Naive thymus-derived CD4-positive, alpha-beta T cell (primary cell): ENCODE measurements at regions of chr6 and their contacts with region 1.

Region 1: DNA sequence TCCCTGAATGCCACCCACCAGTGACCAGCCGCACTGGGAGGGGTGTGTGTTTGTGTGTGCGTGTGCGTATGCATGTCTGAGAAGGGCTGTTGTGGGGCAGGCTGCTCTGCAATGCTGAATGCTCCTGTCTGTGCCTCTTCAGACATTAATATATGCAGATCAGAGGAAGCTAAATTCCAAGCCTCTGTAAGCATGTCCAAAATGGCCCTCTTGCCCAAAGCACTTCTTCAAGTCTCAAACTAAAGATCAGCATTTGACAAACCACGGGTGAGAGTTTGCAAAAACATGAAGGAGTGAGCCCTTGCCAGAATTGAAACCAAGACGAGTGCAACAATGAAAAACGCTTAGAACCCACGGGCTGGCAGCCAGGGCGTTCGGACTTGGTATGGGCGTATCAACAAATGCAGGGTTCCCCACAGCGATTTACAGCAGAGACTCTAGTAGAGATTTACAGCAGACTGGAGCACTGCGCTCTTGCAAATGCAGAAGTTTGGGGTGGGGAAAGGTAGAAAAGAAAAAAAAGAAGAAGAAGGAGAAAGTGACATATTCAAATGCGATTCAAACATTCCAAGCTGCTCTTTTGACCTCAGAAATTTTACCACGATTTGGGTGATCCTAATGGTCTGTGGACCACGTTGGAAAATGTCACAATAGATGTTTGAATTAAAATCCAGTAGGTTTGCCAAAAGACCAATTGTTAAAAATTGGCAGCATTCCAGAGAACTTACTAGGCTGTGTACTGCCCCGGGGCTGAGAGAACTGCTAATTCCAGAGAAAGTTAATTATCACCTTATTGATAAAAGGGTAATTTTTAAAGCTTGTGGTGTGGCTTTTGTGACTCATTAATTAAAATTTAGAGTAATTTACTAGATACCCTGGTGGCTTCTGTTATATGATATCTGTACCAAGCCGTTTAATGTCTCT is 3.5 kb downstream of the SCML4 start:
- DNase-seq: peak in 8 of 9 donors; percentile 13 to 62 (median 51)
- ATAC-seq: peak; percentile 9
- H3K4me3 ChIP-seq: peak overlapping the region; percentile 76
- H3K4me3 Mint-ChIP-seq: peak overlapping the region; percentile 85 to 98 (median 95)
- H3K27ac ChIP-seq: peak overlapping the region; percentile 95
- H3K27ac Mint-ChIP-seq: peak overlapping the region; percentile 96 to 100 (median 99)
- H3K4me1 ChIP-seq: peaks cover 57 to 59% of the 10 kb centered on the region in 2 donors
- H3K4me1 Mint-ChIP-seq: peaks cover 45 to 83% (median 81%) of the 10 kb centered on the region in 7 donors
- H3K27me3 ChIP-seq: no peaks in the 10 kb centered on the region
- H3K27me3 Mint-ChIP-seq: no peaks in the 10 kb centered on the region

Region 2: DNA sequence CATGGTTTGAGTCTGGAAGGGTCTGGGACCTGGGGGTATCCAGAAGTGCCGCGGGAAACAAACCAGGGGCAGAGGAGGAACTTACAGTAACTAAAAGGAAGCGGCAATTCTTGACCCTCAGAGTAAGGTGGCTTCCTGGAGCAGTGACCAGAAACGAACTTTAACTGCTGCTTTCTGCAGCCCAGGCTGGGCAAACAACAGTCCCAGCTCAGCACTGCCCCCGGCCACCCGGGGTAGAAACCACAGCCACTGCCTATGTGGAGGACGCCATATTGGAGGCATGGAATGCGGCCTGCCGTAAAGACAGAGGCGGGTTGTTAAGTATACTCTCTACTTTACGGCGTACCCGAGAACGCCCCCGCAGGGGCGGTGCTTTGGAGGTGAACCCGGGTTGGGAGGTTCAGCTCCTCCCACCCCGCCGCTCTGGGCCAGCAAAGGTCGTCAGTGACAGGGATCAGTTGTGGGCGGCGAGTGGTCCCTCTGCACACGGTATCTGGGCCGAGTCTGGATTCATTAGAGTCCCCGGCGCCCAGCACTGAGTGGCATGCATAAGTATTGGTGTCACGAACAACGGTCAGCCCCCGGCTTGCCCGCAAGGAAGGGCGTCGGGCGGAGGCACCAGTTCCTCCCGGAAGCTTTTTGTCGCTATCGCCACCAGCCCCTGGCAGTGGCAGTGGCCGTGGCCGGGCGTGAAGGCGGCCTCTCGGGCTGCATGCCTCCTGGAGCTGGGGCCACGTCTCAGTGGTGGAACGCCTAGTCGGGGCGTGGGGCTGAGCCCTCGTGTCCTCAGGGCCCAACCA is 361.1 kb before region 1 on chr6 and contains the start of gene PDSS2:
- CTCF ChIA-PET with region 1: no interaction called
- POLR2A ChIA-PET with region 1: no interaction called
- intact Hi-C with region 1: loop called (anchors 1 to 5 kb)
- DNase-seq: peak; percentile 83 to 98 (median 95)
- ATAC-seq: peak; percentile 100
- H3K4me3 ChIP-seq: peak within 1 kb of the TSS; percentile 95
- H3K4me3 Mint-ChIP-seq: peak within 1 kb of the TSS; percentile 87 to 99 (median 96)
- H3K27ac ChIP-seq: peak within 1 kb of the TSS; percentile 75
- H3K27ac Mint-ChIP-seq: peak within 1 kb of the TSS; percentile 92 to 99 (median 96)
- H3K4me1 ChIP-seq: peaks cover 5% of the 10 kb centered on the region in 2 donors
- H3K4me1 Mint-ChIP-seq: peaks cover 10 to 41% (median 36%) of the 10 kb centered on the region in 7 donors
- H3K27me3 ChIP-seq: no peaks in the 10 kb centered on the region
- H3K27me3 Mint-ChIP-seq: peaks cover 0 to 7% (median 0%) of the 10 kb centered on the region in 5 donors
- total RNA-seq, gene PDSS2: 12.0 to 15.3 (median 12.1) TPM

Region 3: DNA sequence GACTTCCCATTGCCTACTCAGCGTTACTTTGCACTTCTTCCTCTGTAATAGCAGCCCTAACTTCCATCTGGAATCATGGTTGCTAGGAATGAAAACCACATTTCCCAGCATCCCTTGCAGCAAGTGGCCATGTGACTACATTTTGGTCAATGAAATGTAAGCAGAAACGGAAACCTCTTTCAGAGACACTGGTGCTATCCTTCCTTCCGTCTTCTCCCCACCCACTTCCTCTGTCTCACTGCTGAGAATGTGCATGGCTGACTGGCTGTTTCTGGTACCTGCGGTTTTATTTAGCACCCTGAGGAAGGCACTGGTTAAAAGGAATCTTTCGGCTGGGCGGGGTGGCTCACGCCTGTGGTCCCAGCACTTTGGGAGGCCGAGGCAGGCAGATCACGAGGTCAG is 103.9 kb before region 1 on chr6:
- CTCF ChIA-PET with region 1: interaction called, 4 read pairs
- POLR2A ChIA-PET with region 1: interaction called, 9 read pairs
- intact Hi-C with region 1: loop called (anchors 1 kb)
- DNase-seq: peak; percentile 27 to 89 (median 85)
- ATAC-seq: peak; percentile 95
- H3K4me3 ChIP-seq: no peak overlapping the region
- H3K4me3 Mint-ChIP-seq: peak overlapping the region; percentile 43 to 81 (median 72)
- H3K27ac ChIP-seq: peak overlapping the region; percentile 49
- H3K27ac Mint-ChIP-seq: peak overlapping the region; percentile 82 to 97 (median 92)
- H3K4me1 ChIP-seq: peaks cover 47 to 57% of the 10 kb centered on the region in 2 donors
- H3K4me1 Mint-ChIP-seq: peaks cover 46 to 86% (median 74%) of the 10 kb centered on the region in 7 donors
- H3K27me3 ChIP-seq: no peaks in the 10 kb centered on the region
- H3K27me3 Mint-ChIP-seq: no peaks in the 10 kb centered on the region

Region 4: GRCh38 chr6:107786709-107787588 is 33.7 kb before region 1 on chr6:
- CTCF ChIA-PET with region 1: interaction called, 6 read pairs
- POLR2A ChIA-PET with region 1: interaction called, 127 read pairs
- intact Hi-C with region 1: loop called (anchors 1 kb)
- DNase-seq: peak in 7 of 9 donors; percentile 51 to 80 (median 65)
- ATAC-seq: peak; percentile 87
- H3K4me3 ChIP-seq: peak overlapping the region; percentile 34
- H3K4me3 Mint-ChIP-seq: peak overlapping the region; percentile 74 to 88 (median 82)
- H3K27ac ChIP-seq: peak overlapping the region; percentile 70
- H3K27ac Mint-ChIP-seq: peak overlapping the region; percentile 83 to 97 (median 95)
- H3K4me1 ChIP-seq: peaks cover 51 to 78% of the 10 kb centered on the region in 2 donors
- H3K4me1 Mint-ChIP-seq: peaks cover 65 to 92% (median 90%) of the 10 kb centered on the region in 7 donors
- H3K27me3 ChIP-seq: no peaks in the 10 kb centered on the region
- H3K27me3 Mint-ChIP-seq: peaks cover 0 to 6% (median 0%) of the 10 kb centered on the region in 5 donors

Region 5: DNA sequence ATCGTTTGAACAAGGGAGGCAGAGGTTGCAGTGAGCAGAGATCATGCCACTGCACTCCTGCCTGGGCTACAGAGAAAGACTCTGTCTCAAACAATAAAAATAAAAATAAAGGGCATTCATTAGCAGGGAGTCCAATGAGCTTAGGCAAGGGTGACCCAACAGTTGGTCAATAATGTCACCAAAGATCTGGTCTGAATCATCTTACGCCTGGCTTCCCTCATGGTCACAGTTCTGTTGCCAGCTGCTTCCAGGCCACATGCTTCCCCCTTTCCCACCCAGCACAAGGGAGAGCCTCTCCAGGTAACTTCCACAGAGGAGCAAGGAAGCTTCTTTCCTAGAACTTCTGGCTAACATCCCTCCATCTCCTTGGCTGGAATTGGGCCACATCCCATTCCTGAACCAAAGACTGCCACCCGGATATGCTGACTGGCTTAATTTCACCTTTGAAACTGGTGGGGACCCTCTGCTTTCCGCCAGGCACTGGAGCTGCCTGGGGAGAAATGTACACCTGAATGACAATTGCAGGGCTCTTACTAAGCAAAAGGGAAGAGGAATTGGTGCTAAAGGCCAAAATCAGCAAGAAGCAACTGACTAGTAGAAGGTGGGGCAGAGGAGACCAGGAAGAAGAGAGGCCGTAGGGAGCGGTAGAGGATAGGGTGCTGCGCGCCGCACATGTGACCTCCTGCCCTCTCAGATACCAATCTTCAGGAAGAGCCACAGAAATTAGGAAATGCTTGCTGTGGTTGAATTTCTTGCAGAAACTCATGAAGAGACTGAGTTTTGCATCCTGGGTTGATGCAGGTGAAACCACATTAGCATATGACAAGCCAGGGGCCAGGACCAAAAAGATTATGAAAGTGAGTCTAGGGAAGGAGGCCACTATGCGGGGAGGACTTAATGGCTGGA is 11.8 kb after region 1 on chr6:
- CTCF ChIA-PET with region 1: interaction called, 12 read pairs
- POLR2A ChIA-PET with region 1: interaction called, 22 read pairs
- intact Hi-C with region 1: no loop called
- DNase-seq: peak in 1 of 9 donors; percentile 14
- ATAC-seq: peak; percentile 57
- H3K4me3 ChIP-seq: no peak overlapping the region
- H3K4me3 Mint-ChIP-seq: peak overlapping the region in 7 of 10 donors; percentile 5 to 56 (median 28)
- H3K27ac ChIP-seq: no peak overlapping the region
- H3K27ac Mint-ChIP-seq: peak overlapping the region; percentile 1 to 66 (median 43)
- H3K4me1 ChIP-seq: peaks cover 0 to 13% of the 10 kb centered on the region in 2 donors
- H3K4me1 Mint-ChIP-seq: peaks cover 18 to 37% (median 28%) of the 10 kb centered on the region in 7 donors
- H3K27me3 ChIP-seq: no peaks in the 10 kb centered on the region
- H3K27me3 Mint-ChIP-seq: no peaks in the 10 kb centered on the region

Region 6: GRCh38 chr6:108558372-108559096 is 737.9 kb after region 1 on chr6:
- CTCF ChIA-PET with region 1: no interaction called
- POLR2A ChIA-PET with region 1: no interaction called
- intact Hi-C with region 1: loop called in 1 of 2 experiments (anchors 1 kb)
- DNase-seq: peak; percentile 91 to 98 (median 97)
- ATAC-seq: peak; percentile 75
- H3K4me3 ChIP-seq: peak overlapping the region; percentile 75
- H3K4me3 Mint-ChIP-seq: peak overlapping the region; percentile 88 to 98 (median 97)
- H3K27ac ChIP-seq: peak overlapping the region; percentile 100
- H3K27ac Mint-ChIP-seq: peak overlapping the region; percentile 87 to 99 (median 97)
- H3K4me1 ChIP-seq: peaks cover 12 to 13% of the 10 kb centered on the region in 2 donors
- H3K4me1 Mint-ChIP-seq: peaks cover 16 to 28% (median 20%) of the 10 kb centered on the region in 7 donors
- H3K27me3 ChIP-seq: no peaks in the 10 kb centered on the region
- H3K27me3 Mint-ChIP-seq: peaks cover 0 to 55% (median 6%) of the 10 kb centered on the region in 5 donors